ENCODE measurements at regions of chr14 and their contacts with region 1.

Region 1: DNA sequence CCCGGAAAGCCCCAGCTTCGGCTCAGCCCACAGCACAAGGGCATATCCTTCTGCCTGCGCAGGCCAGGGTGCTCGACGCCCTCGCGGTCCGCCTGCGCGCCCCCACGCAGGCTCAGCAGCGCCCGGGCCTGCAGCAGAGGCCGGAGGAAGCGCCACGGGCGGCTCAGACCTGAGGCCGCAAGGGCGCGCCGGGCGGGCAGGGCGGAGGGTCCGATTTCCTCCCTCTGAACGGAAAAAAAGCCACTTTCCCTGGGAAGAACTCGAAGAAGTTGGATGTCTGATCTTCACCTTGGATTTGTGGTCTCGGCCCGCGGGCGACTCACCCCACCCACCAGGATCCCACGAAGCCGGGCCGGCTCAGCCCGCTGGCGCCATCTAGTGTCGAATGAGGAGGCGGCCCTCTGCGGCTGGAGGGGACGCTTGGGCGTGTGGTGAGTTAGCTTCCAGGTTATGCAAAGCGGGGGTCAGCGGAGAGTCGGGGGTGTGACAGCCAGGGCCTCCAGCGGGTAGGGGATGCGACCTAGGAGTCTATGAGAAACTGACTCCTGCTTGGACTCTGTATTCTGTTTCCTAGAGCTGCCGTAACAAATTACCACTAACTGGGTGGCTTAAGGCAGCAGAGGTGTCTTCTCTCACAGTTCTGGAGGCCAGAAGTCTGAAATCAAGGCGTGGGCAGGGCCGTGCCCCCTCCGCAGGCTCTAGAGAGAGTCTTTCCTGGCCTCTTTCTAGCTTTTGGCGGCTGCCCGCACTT is 40.0 kb upstream of the SRSF5 start:
- DNase-seq: peak; percentile 75 to 92 (median 87)
- H3K4me3 ChIP-seq: peak overlapping the region; percentile 39
- H3K27ac ChIP-seq: peak overlapping the region in 1 of 2 donors; percentile 45
- H3K4me1 ChIP-seq: peaks cover 4% of the 10 kb centered on the region
- H3K27me3 ChIP-seq: no peaks in the 10 kb centered on the region
- CTCF ChIP-seq: peak; percentile 97 to 99 (median 97)
- EP300 ChIP-seq: no peak
- POLR2A ChIP-seq: no peak

Region 2: DNA sequence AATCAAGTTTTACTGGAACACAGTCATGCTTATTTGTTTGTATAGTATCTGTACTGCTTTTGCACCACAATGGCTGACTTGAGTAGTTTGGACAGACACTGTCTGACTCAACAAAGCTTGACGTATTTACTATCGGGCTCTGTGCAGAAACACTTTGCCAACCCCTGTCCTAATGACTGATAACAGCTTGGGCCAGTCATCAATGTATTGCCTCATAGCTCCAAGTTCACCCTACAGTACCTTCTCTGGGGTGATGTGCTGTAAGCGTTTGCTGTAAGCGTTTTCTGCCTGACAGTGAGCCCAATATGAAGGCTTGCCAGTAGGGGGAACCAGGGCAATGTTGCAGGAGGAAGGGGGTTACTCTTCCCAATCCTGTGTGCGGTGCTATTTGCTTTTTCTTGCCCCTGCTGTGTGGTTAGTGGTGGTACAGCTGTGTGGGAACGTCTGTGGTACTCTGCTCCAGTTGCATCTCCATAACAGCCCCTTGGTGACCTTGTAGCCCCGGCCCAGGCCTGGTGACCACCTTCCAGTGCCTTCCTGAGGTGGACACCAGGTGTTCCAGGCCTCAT is 146.8 kb before region 1 on chr14:
- intact Hi-C with region 1: loop called (anchors 1 to 5 kb)
- DNase-seq: peak in 1 of 5 donors; percentile 25
- H3K4me3 ChIP-seq: no peak overlapping the region
- H3K27ac ChIP-seq: no peak overlapping the region
- H3K4me1 ChIP-seq: no peaks in the 10 kb centered on the region
- H3K27me3 ChIP-seq: no peaks in the 10 kb centered on the region
- CTCF ChIP-seq: no peak
- EP300 ChIP-seq: no peak
- POLR2A ChIP-seq: no peak

Region 3: DNA sequence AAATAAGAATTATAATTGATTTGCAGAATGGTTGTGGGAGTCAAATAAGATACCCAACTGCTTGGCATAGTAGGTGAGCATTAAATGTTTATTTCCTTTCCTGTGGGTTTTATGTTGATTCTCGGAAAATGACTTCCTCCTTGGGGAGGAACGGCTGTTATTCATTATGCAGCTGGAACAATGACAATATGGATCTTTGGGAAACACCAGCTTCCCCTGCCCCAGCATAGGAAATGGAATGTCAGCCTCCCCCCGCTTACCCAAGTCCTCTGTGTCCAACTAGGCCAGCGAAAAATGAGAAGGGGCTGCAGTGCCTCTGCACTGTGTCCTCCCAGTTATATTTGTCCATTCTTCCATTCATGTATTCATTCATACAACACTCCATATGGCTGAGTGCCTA is 140.5 kb before region 1 on chr14:
- intact Hi-C with region 1: loop called (anchors 1 to 5 kb)
- DNase-seq: no peak
- H3K4me3 ChIP-seq: no peak overlapping the region
- H3K27ac ChIP-seq: no peak overlapping the region
- H3K4me1 ChIP-seq: no peaks in the 10 kb centered on the region
- H3K27me3 ChIP-seq: no peaks in the 10 kb centered on the region
- CTCF ChIP-seq: no peak
- EP300 ChIP-seq: no peak
- POLR2A ChIP-seq: no peak

Region 4: DNA sequence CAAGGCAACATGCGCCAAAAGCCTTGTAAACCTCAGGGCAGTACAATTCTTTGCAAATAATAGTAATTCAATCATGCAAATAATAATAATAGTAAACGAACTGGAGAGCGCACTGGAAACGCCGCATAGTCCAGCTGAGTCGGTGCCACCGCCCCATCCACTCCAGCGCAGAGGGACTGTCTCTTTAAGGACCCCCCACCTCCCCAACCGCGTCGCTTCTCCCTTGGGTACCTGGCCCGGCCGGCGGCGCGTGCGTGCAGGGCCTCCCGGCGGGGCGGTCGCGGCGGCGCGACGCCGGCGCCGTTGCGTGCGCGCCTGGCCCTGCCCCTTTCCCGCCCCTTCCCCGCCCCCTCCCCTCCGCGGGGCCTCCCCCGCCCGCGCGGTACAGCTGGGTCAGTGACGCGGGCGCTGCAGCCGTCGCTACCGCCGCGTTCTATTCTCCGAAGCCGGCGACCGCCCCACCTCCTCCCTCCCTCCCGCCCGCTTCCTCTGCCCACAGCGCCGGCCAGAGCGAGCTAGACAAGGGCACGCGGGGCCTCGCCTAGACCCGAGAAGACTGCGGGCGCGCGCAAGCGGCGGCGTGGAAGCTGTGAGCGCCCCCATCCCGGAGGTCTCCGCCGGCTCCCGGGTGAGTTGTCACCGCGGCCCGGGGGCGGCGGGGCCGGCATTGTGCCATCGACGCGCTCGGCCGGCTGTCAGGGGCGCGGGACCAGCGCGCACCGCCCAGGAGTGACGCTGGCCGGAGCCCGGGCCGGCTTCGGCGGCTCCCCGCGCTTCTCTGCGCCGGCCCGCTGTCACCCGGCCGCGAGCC is 115.5 kb before region 1 on chr14 and contains the start of gene SUSD6:
- intact Hi-C with region 1: loop called in 1 of 4 experiments (anchors 5 kb)
- DNase-seq: peak; percentile 88 to 92 (median 90)
- H3K4me3 ChIP-seq: peak within 1 kb of the TSS; percentile 62
- H3K27ac ChIP-seq: peak within 1 kb of the TSS; percentile 87 to 93
- H3K4me1 ChIP-seq: peaks cover 14% of the 10 kb centered on the region
- H3K27me3 ChIP-seq: no peaks in the 10 kb centered on the region
- CTCF ChIP-seq: no peak
- EP300 ChIP-seq: peak; percentile 52
- POLR2A ChIP-seq: peak; percentile 39
- total RNA-seq, gene SUSD6: 18.0 to 35.3 (median 29.9) TPM

Region 5: GRCh38 chr14:70045844-70046535 is 319.1 kb after region 1 on chr14:
- intact Hi-C with region 1: no loop called
- DNase-seq: peak in 2 of 5 donors; percentile 22 to 44
- H3K4me3 ChIP-seq: no peak overlapping the region
- H3K27ac ChIP-seq: no peak overlapping the region
- H3K4me1 ChIP-seq: peaks cover 2% of the 10 kb centered on the region
- H3K27me3 ChIP-seq: no peaks in the 10 kb centered on the region
- CTCF ChIP-seq: no peak
- EP300 ChIP-seq: no peak
- POLR2A ChIP-seq: no peak

Measured in ovary (tissue), 10 donors.